ENCODE measurements at regions of chr17 and their contacts with region 1.

Region 1: DNA sequence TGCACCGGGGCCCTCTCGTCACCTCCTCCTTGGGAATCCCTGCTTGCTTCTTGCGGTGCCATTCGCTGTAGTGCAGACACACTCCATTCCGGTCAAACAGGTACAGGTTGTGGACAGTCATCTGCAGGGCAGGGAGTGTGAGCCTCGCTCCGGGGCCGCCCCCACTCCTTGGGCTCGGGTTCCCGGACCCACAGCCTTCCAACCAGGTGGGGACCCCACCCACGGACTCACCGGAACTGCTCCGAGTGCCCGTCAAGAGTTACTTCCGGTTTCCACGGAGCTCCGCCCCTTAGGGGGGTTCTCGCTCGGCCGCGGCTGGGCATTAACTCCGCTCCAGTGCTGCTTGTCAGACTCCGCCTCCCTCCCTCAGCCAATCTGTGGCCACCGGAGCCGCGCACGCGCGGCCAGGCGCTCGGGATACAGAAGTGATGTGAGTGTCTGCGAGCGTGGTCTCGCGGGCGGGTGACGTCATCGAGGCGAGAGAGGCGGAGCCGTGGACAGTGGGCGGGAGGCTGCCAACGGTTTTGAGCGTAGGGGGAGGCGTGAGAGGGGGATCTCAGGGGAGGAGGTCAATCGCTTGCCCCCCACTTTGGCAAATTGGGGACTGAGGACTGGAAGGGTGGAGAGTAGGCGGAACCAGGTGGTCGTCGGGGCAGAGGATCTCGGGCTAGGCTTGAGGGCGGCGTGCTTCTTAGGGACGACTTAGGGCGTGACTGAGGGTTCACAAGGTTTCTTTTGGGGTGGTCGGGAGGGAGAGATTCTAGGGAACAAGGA is at the starts of genes CNTROB and TRAPPC1:
- DNase-seq: peak; percentile 100
- ATAC-seq: peak; percentile 99
- H3K4me3 Mint-ChIP-seq: peak within 1 kb of the TSS; percentile 95
- H3K27ac Mint-ChIP-seq: peak within 1 kb of the TSS; percentile 96
- H3K4me1 Mint-ChIP-seq: peaks cover 44% of the 10 kb centered on the region
- H3K27me3 Mint-ChIP-seq: no peaks in the 10 kb centered on the region
- total RNA-seq, gene CNTROB: 53.0 to 80.5 TPM
- total RNA-seq, gene TRAPPC1: 166 to 169 TPM

Region 2: DNA sequence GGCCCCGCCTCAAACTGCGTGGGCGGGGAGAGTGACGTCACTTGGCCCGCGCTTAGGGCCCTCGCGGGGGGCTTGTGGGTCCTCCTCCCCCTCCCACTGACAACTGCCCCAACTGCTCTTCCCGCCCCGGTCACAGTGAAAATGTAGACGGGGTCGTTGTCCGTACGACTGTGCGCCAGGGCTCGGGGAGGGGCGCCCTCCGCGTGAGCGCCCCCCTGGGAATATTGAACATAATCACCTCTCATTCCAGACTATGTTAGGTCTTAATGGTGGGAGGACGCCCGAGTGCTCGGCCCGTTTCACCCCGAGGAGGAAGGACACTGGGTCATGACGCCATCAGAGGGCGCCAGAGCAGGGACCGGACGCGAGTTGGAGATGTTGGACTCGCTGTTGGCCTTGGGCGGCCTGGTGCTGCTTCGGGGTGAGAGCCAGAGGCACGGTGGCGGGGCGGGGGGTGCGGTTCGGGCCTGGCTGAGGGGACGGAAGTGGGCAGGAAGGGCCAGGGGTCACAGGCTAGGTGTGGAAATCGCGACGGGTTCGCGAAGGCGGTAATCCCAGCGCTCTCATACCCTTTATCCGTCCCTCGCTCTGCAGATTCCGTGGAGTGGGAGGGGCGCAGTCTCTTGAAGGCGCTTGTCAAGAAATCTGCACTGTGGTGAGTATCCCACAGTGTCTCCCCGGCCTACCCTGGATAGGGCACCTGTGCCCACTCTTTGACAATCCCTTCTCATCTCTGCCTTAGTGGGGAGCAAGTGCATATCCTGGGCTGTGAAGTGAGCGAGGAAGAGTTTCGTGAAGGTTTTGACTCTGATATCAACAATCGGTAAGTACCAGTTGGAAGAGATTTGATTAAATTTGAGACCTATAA is 679.5 kb before region 1 on chr17 and contains the start of gene ELP5:
- CTCF ChIA-PET with region 1: no interaction called
- POLR2A ChIA-PET with region 1: no interaction called
- intact Hi-C with region 1: loop called in 1 of 2 experiments (anchors 5 kb)
- DNase-seq: peak; percentile 94
- ATAC-seq: peak; percentile 65
- H3K4me3 Mint-ChIP-seq: peak within 1 kb of the TSS; percentile 93
- H3K27ac Mint-ChIP-seq: peak within 1 kb of the TSS; percentile 99
- H3K4me1 Mint-ChIP-seq: peaks cover 40% of the 10 kb centered on the region
- H3K27me3 Mint-ChIP-seq: no peaks in the 10 kb centered on the region
- total RNA-seq, gene ELP5: 58.1 to 62.3 TPM

Region 3: GRCh38 chr17:7583253-7584109 is 348.4 kb before region 1 on chr17 and contains the start of gene MPDU1:
- CTCF ChIA-PET with region 1: no interaction called
- POLR2A ChIA-PET with region 1: no interaction called
- intact Hi-C with region 1: loop called in 1 of 2 experiments (anchors 5 kb)
- DNase-seq: peak; percentile 98
- ATAC-seq: peak; percentile 77
- H3K4me3 Mint-ChIP-seq: peak within 1 kb of the TSS; percentile 82
- H3K27ac Mint-ChIP-seq: peak within 1 kb of the TSS; percentile 100
- H3K4me1 Mint-ChIP-seq: peaks cover 56% of the 10 kb centered on the region
- H3K27me3 Mint-ChIP-seq: no peaks in the 10 kb centered on the region
- total RNA-seq, gene MPDU1: 51.7 to 77.0 TPM

Region 4: GRCh38 chr17:7887482-7888183 is 44.3 kb before region 1 on chr17:
- CTCF ChIA-PET with region 1: no interaction called
- POLR2A ChIA-PET with region 1: no interaction called
- intact Hi-C with region 1: loop called (anchors 1 kb)
- DNase-seq: peak; percentile 94
- ATAC-seq: peak; percentile 79
- H3K4me3 Mint-ChIP-seq: no peak overlapping the region
- H3K27ac Mint-ChIP-seq: no peak overlapping the region
- H3K4me1 Mint-ChIP-seq: peaks cover 4% of the 10 kb centered on the region
- H3K27me3 Mint-ChIP-seq: no peaks in the 10 kb centered on the region

Region 5: GRCh38 chr17:7951143-7951803 is 19.4 kb after region 1 on chr17:
- CTCF ChIA-PET with region 1: interaction called, 7 read pairs
- POLR2A ChIA-PET with region 1: interaction called, 4 read pairs
- intact Hi-C with region 1: loop called (anchors 1 to 2 kb)
- DNase-seq: peak; percentile 71
- ATAC-seq: peak; percentile 97
- H3K4me3 Mint-ChIP-seq: peak overlapping the region; percentile 4
- H3K27ac Mint-ChIP-seq: peak overlapping the region; percentile 83
- H3K4me1 Mint-ChIP-seq: peaks cover 22% of the 10 kb centered on the region
- H3K27me3 Mint-ChIP-seq: no peaks in the 10 kb centered on the region

Region 6: DNA sequence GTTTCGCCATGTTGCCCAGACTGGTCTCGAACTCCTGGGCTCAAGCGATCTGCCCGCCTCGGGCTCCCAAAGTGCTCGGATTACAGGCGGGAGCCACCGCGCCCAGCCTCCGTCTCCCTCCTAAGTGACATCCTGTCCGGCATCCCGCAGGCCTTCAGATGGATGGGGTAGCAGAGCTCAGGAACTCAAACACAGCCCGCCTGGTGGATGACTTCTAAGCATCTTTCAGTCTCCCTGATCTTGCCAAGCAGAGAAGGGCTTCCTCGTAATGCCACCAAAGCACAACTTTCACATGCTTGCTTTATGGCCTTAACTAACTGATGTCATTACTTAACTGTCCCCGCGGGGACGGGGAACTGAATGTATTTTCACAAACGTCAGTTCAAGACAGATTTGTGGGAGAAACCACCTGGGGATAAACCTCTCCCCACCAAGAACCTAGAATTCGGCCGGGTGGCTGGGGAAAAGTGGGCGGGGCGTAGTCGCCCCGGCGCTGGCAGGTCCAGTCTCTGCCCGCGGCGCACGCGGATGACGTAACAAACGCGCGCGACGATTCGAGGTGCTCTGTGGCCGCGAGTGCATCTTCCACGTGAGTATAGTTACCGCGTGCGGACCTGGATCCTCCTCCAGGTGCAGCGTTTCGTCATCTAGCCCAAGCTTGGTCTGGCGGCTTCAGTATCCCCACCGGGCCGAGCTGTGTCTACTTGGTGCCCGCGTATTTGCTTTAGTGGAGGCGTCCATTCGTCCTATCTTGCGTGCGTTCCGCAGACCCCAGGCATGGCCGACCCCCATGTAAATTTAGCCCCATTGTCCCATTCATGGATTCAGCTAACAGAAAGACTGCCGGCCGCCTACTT is 317.1 kb after region 1 on chr17 and contains the start of gene PFAS:
- CTCF ChIA-PET with region 1: no interaction called
- POLR2A ChIA-PET with region 1: no interaction called
- intact Hi-C with region 1: loop called in 1 of 2 experiments (anchors 2 kb)
- DNase-seq: peak; percentile 98
- ATAC-seq: peak; percentile 57
- H3K4me3 Mint-ChIP-seq: peak within 1 kb of the TSS; percentile 94
- H3K27ac Mint-ChIP-seq: peak within 1 kb of the TSS; percentile 98
- H3K4me1 Mint-ChIP-seq: peaks cover 36% of the 10 kb centered on the region
- H3K27me3 Mint-ChIP-seq: no peaks in the 10 kb centered on the region
- total RNA-seq, gene PFAS: 113 to 141 TPM

Measured in activated CD4-positive, alpha-beta T cell treated with anti-CD3 and anti-CD28 coated beads for 36 hours (primary cell).